ENCODE measurements at regions of chr14 and their contacts with region 1.

Region 1: DNA sequence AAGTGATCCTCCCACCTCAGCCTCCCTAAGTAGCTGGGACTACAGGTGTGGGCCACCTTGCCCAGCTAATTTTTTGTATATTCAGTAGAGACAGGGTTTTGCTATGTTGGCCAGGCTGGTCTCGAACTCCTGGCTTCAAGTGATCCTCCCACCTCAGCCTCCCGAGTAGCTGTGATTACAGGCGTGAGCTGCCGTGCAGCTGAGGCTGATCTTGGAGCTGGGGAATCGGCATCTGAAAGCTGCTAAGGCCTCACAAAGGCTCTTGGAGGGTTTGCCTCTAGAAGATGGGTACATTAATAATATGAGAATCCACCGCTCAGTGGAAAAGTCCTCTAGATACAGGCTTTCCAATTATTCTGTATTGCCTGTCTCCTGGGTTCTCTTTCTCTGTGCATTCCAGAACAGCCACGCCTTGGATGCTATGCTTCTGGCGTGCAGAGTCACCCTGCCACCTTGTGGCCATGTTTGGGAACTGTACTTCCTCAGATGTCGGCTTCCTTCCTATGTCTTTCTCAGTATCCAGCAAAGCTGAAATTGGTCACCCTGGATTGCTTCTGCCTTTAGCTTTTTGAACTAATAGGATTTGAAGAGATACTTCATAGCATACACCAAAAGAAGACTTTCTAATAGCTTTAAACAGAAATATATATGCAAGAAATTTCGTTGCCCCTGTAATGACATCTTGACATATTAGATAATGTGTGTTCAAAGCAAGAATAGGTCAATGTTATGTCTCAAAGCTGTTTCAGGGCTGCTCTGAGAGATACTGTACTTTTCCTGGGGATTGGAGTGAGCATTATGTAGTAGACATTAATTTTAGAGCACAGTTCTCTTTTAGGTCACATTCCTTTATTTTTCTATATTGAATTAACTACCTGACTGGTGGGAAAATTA is 75.4 kb downstream of the SNAPC1 start:
- DNase-seq: peak; percentile 60 to 77
- ATAC-seq: peak; percentile 79 to 94 (median 92)
- H3K4me3 ChIP-seq: no peak overlapping the region
- H3K27ac ChIP-seq: no peak overlapping the region
- H3K4me1 ChIP-seq: peaks cover 0 to 20% (median 0%) of the 10 kb centered on the region in 9 donors
- H3K27me3 ChIP-seq: peaks cover 0 to 6% (median 0%) of the 10 kb centered on the region in 7 donors
- CTCF ChIP-seq: peak; percentile 92 to 99 (median 95)

Region 2: GRCh38 chr14:61269321-61270083 is 568.1 kb before region 1 on chr14:
- intact Hi-C with region 1: loop called in 3 of 10 experiments (anchors 10 kb)
- DNase-seq: peak; percentile 42 to 71
- ATAC-seq: peak; percentile 63 to 87 (median 75)
- H3K4me3 ChIP-seq: peak overlapping the region in 8 of 10 donors; percentile 23 to 54 (median 34)
- H3K27ac ChIP-seq: no peak overlapping the region
- H3K4me1 ChIP-seq: peaks cover 0 to 8% (median 0%) of the 10 kb centered on the region in 9 donors
- H3K27me3 ChIP-seq: peaks cover 3 to 70% (median 30%) of the 10 kb centered on the region in 7 donors
- CTCF ChIP-seq: peak; percentile 56 to 92 (median 76)

Region 3: GRCh38 chr14:61308198-61308597 is 529.4 kb before region 1 on chr14:
- intact Hi-C with region 1: loop called in 1 of 10 experiments (anchors 10 kb)
- DNase-seq: no peak
- ATAC-seq: peak; percentile 23 to 93 (median 80)
- H3K4me3 ChIP-seq: no peak overlapping the region
- H3K27ac ChIP-seq: peak overlapping the region in 6 of 10 donors; percentile 49 to 73 (median 59)
- H3K4me1 ChIP-seq: peaks cover 0 to 25% (median 6%) of the 10 kb centered on the region in 9 donors
- H3K27me3 ChIP-seq: peaks cover 0 to 6% (median 0%) of the 10 kb centered on the region in 7 donors
- CTCF ChIP-seq: no peak

Region 4: GRCh38 chr14:61456720-61457119 is 380.9 kb before region 1 on chr14:
- intact Hi-C with region 1: loop called (anchors 1 to 5 kb)
- DNase-seq: peak; percentile 58 to 91
- ATAC-seq: peak; percentile 61 to 82 (median 76)
- H3K4me3 ChIP-seq: no peak overlapping the region
- H3K27ac ChIP-seq: no peak overlapping the region
- H3K4me1 ChIP-seq: peaks cover 0 to 53% (median 27%) of the 10 kb centered on the region in 9 donors
- H3K27me3 ChIP-seq: no peaks in the 10 kb centered on the region
- CTCF ChIP-seq: peak; percentile 70 to 93 (median 90)

Region 5: GRCh38 chr14:61461808-61462275 is 375.7 kb before region 1 on chr14:
- intact Hi-C with region 1: loop called in 9 of 10 experiments (anchors 2 to 5 kb)
- DNase-seq: peak in 1 of 2 donors; percentile 65
- ATAC-seq: peak; percentile 12 to 67 (median 54)
- H3K4me3 ChIP-seq: no peak overlapping the region
- H3K27ac ChIP-seq: peak overlapping the region in 7 of 10 donors; percentile 38 to 74 (median 53)
- H3K4me1 ChIP-seq: peaks cover 0 to 43% (median 35%) of the 10 kb centered on the region in 9 donors
- H3K27me3 ChIP-seq: no peaks in the 10 kb centered on the region
- CTCF ChIP-seq: peak; percentile 72 to 85 (median 82)

Region 6: DNA sequence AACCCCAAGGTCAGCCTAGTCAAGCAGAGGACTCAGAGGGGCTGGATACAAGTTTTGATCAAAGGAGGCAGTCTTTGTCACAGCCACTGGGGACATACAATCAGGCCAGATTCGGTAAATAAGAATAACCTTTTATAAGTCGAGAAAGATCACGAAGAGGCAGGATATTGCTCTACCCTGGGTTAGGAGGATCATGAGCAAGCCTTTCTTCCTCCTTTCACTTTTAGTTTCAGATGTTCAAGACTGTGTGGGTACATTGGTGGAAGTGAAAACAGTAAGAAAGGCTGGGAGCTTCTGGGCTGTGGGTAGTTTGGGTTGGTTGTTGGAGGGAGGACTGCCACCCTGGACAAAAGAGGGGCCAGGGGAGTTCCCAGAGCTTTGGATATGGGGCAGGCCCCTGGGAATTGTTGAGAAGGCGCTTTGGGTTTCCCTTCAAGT is 52.4 kb after region 1 on chr14:
- intact Hi-C with region 1: no loop called
- DNase-seq: no peak
- ATAC-seq: peak in 1 of 8 donors; percentile 29
- H3K4me3 ChIP-seq: no peak overlapping the region
- H3K27ac ChIP-seq: peak overlapping the region in 1 of 10 donors; percentile 66
- H3K4me1 ChIP-seq: peaks cover 0 to 3% (median 0%) of the 10 kb centered on the region in 9 donors
- H3K27me3 ChIP-seq: peaks cover 0 to 19% (median 6%) of the 10 kb centered on the region in 7 donors
- CTCF ChIP-seq: no peak

Measured in heart right ventricle (tissue), 16 donors.